ENCODE measurements at regions of chr1 and their contacts with region 1.

Region 1: GRCh38 chr1:156813750-156814570 is 2.7 kb downstream of the SH2D2A start:
- DNase-seq: peak; percentile 36 to 90 (median 70)
- ATAC-seq: peak; percentile 51
- H3K4me3 ChIP-seq: peak overlapping the region; percentile 73
- H3K4me3 Mint-ChIP-seq: peak overlapping the region; percentile 83
- H3K27ac ChIP-seq: peak overlapping the region; percentile 97 to 99
- H3K27ac Mint-ChIP-seq: peak overlapping the region; percentile 98
- H3K4me1 ChIP-seq: peaks cover 80% of the 10 kb centered on the region
- H3K4me1 Mint-ChIP-seq: peaks cover 58% of the 10 kb centered on the region
- H3K27me3 ChIP-seq: no peaks in the 10 kb centered on the region
- H3K27me3 Mint-ChIP-seq: peaks cover 6% of the 10 kb centered on the region
- CTCF ChIP-seq: peak; percentile 70

Region 2: GRCh38 chr1:156583821-156584622 is 229.9 kb before region 1 on chr1:
- CTCF ChIA-PET with region 1: no interaction called
- POLR2A ChIA-PET with region 1: no interaction called
- intact Hi-C with region 1: no loop called
- DNase-seq: peak; percentile 44 to 90 (median 69)
- ATAC-seq: peak; percentile 63
- H3K4me3 ChIP-seq: no peak overlapping the region
- H3K4me3 Mint-ChIP-seq: peak overlapping the region; percentile 63
- H3K27ac ChIP-seq: no peak overlapping the region
- H3K27ac Mint-ChIP-seq: peak overlapping the region; percentile 90
- H3K4me1 ChIP-seq: peaks cover 32% of the 10 kb centered on the region
- H3K4me1 Mint-ChIP-seq: peaks cover 33% of the 10 kb centered on the region
- H3K27me3 ChIP-seq: no peaks in the 10 kb centered on the region
- H3K27me3 Mint-ChIP-seq: no peaks in the 10 kb centered on the region
- CTCF ChIP-seq: peak; percentile 85

Region 3: DNA sequence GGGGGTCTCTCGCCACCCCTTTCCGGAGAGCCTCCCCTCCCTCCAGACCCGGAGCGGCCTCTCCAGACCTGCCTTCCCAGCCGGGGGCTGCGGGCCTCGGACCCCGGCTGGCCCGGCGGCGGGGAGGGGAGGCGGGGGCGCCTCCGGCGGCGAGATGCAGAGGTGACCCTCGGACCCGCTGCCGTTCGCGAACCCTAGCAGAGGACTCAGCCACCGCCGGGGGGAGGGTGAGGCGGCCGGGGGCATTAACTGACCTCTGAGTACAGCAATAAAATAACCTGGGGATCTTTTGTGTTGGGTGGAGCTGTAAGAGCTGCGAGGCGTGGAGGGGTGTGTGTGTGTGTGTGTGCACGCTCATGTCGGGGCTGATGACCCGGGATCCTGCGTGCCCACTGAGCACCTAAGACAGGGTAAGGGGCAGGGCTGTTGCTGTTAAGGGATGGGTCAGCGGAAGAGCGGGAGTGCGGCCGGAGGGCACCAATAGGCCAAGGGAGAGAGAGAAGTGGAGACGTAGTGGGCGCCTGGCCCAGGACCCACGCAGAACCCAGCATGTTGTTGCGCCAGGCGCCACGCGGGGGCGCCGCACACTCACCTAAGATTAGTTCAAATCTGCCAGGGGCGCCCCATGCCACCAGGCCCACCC is 188.4 kb before region 1 on chr1:
- CTCF ChIA-PET with region 1: no interaction called
- POLR2A ChIA-PET with region 1: no interaction called
- intact Hi-C with region 1: no loop called
- DNase-seq: peak; percentile 54 to 84 (median 64)
- ATAC-seq: peak; percentile 78
- H3K4me3 ChIP-seq: peak overlapping the region; percentile 40
- H3K4me3 Mint-ChIP-seq: peak overlapping the region; percentile 86
- H3K27ac ChIP-seq: no peak overlapping the region
- H3K27ac Mint-ChIP-seq: no peak overlapping the region
- H3K4me1 ChIP-seq: peaks cover 25% of the 10 kb centered on the region
- H3K4me1 Mint-ChIP-seq: peaks cover 6% of the 10 kb centered on the region
- H3K27me3 ChIP-seq: peaks cover 46 to 51% of the 10 kb centered on the region in 2 experiments
- H3K27me3 Mint-ChIP-seq: peaks cover 74% of the 10 kb centered on the region
- CTCF ChIP-seq: peak; percentile 94

Region 4: GRCh38 chr1:156677616-156678596 is 136.1 kb before region 1 on chr1:
- CTCF ChIA-PET with region 1: no interaction called
- POLR2A ChIA-PET with region 1: no interaction called
- intact Hi-C with region 1: no loop called
- DNase-seq: peak in 4 of 14 experiments; percentile 42 to 66 (median 57)
- ATAC-seq: peak; percentile 26
- H3K4me3 ChIP-seq: no peak overlapping the region
- H3K4me3 Mint-ChIP-seq: no peak overlapping the region
- H3K27ac ChIP-seq: no peak overlapping the region
- H3K27ac Mint-ChIP-seq: no peak overlapping the region
- H3K4me1 ChIP-seq: peaks cover 14% of the 10 kb centered on the region
- H3K4me1 Mint-ChIP-seq: peaks cover 13% of the 10 kb centered on the region
- H3K27me3 ChIP-seq: peaks cover 63 to 72% of the 10 kb centered on the region in 2 experiments
- H3K27me3 Mint-ChIP-seq: peaks cover 82% of the 10 kb centered on the region
- CTCF ChIP-seq: peak; percentile 56

Region 5: DNA sequence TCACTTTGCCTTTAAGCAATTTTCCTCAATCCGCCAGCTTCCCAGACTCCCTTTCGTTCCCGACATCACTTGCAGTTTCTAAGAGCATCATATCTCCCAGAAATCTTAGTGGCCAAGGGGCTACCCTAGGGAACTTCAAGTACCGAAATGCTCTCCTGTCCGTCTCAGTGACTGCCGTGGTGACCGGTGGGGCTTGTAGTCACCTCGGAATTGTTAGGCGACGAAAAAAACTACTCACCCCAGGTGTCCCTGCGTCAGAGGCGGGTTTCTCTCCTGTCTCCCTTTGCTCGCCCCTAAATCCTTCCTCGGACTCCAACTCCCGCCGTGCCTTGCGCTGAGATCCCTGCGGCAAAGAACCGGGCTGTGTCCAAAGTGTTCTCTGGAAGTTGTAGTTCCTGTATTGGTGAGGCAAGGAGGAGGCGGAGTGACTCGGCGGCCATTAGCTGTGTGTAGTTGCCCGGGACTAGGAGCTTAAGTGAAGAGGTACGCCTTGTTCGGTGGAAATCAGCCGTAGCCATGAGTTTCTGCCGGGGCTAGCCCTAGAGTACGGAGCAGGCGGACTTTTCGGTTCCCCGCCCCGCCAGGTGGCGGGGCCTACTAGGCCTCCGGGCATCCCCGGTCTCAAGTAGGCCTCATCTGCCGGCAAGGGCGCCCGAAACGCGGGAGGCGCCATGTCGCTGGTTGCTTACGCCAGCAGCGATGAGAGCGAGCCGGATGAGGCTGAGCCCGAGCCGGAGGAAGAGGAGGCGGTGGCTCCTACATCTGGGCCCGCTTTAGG is 46.7 kb before region 1 on chr1 and contains the start of gene PRCC:
- CTCF ChIA-PET with region 1: interaction called, 6 read pairs
- POLR2A ChIA-PET with region 1: interaction called, 11 read pairs
- intact Hi-C with region 1: loop called in 1 of 2 experiments (anchors 5 kb)
- DNase-seq: peak; percentile 91 to 100 (median 96)
- ATAC-seq: peak; percentile 88
- H3K4me3 ChIP-seq: peak within 1 kb of the TSS; percentile 87
- H3K4me3 Mint-ChIP-seq: no peak within 1 kb of the TSS
- H3K27ac ChIP-seq: peak within 1 kb of the TSS; percentile 96
- H3K27ac Mint-ChIP-seq: no peak within 1 kb of the TSS
- H3K4me1 ChIP-seq: peaks cover 42% of the 10 kb centered on the region
- H3K4me1 Mint-ChIP-seq: peaks cover 37% of the 10 kb centered on the region
- H3K27me3 ChIP-seq: no peaks in the 10 kb centered on the region
- H3K27me3 Mint-ChIP-seq: no peaks in the 10 kb centered on the region
- CTCF ChIP-seq: no peak
- total RNA-seq, gene PRCC: 49.5 to 50.0 TPM

Region 6: GRCh38 chr1:156797212-156797871 is 16.6 kb before region 1 on chr1:
- CTCF ChIA-PET with region 1: interaction called, 14 read pairs
- POLR2A ChIA-PET with region 1: interaction called, 4 read pairs
- intact Hi-C with region 1: no loop called
- DNase-seq: peak in 13 of 14 experiments; percentile 26 to 84 (median 58)
- ATAC-seq: peak; percentile 92
- H3K4me3 ChIP-seq: no peak overlapping the region
- H3K4me3 Mint-ChIP-seq: no peak overlapping the region
- H3K27ac ChIP-seq: no peak overlapping the region
- H3K27ac Mint-ChIP-seq: peak overlapping the region; percentile 5
- H3K4me1 ChIP-seq: peaks cover 21% of the 10 kb centered on the region
- H3K4me1 Mint-ChIP-seq: peaks cover 8% of the 10 kb centered on the region
- H3K27me3 ChIP-seq: no peaks in the 10 kb centered on the region
- H3K27me3 Mint-ChIP-seq: no peaks in the 10 kb centered on the region
- CTCF ChIP-seq: peak; percentile 79

Region 7: DNA sequence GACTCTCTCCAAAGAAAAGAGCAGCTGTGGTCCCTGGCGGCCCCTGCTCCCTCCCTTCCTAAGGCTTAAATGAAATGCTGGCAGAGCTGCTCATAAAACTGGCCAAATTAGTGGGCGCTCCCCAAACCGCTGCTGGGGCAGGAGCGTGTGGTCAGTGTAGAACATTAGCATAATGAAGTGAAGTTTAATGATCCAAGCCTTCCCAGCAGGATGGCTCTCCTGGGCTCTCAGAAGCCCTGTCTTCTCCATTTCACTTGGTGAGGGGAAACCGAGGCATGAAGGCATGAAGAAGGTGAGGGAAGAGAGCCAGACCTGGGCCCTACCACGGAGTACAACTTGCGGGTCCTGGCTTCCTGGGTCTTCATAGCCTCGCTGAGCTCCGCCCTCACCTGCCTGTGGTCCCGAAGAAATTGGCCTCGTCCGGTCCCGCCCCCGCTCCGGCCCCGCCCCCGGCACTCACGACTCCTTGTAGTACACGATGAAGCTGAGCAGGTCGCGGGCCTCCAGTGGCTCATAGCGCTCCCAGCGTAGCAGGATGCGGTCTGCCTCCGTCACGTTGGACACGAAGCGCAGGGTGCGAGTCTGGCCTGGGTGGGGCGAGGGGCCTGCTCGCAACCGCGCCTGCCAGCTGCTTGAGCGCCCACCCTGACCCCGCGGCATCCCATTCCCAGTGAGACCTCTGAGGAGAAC is 34.6 kb after region 1 on chr1:
- CTCF ChIA-PET with region 1: interaction called, 8 read pairs
- POLR2A ChIA-PET with region 1: interaction called, 10 read pairs
- intact Hi-C with region 1: loop called (anchors 5 kb)
- DNase-seq: peak; percentile 56 to 92 (median 72)
- ATAC-seq: peak; percentile 86
- H3K4me3 ChIP-seq: peak overlapping the region; percentile 37
- H3K4me3 Mint-ChIP-seq: peak overlapping the region; percentile 70
- H3K27ac ChIP-seq: no peak overlapping the region
- H3K27ac Mint-ChIP-seq: peak overlapping the region; percentile 37
- H3K4me1 ChIP-seq: peaks cover 30% of the 10 kb centered on the region
- H3K4me1 Mint-ChIP-seq: peaks cover 46% of the 10 kb centered on the region
- H3K27me3 ChIP-seq: peaks cover 16% of the 10 kb centered on the region in 2 experiments
- H3K27me3 Mint-ChIP-seq: peaks cover 43% of the 10 kb centered on the region
- CTCF ChIP-seq: no peak

Region 8: GRCh38 chr1:157117527-157118057 is 303.6 kb after region 1 on chr1:
- CTCF ChIA-PET with region 1: no interaction called
- POLR2A ChIA-PET with region 1: no interaction called
- intact Hi-C with region 1: no loop called
- DNase-seq: peak in 1 of 14 experiments; percentile 35
- ATAC-seq: no peak
- H3K4me3 ChIP-seq: no peak overlapping the region
- H3K4me3 Mint-ChIP-seq: no peak overlapping the region
- H3K27ac ChIP-seq: no peak overlapping the region
- H3K27ac Mint-ChIP-seq: no peak overlapping the region
- H3K4me1 ChIP-seq: peaks cover 10% of the 10 kb centered on the region
- H3K4me1 Mint-ChIP-seq: peaks cover 19% of the 10 kb centered on the region
- H3K27me3 ChIP-seq: no peaks in the 10 kb centered on the region
- H3K27me3 Mint-ChIP-seq: no peaks in the 10 kb centered on the region
- CTCF ChIP-seq: no peak

Measured in CD4-positive, alpha-beta T cell (primary cell).